ENCODE measurements at regions of chr5 and their contacts with region 1.

Region 1: DNA sequence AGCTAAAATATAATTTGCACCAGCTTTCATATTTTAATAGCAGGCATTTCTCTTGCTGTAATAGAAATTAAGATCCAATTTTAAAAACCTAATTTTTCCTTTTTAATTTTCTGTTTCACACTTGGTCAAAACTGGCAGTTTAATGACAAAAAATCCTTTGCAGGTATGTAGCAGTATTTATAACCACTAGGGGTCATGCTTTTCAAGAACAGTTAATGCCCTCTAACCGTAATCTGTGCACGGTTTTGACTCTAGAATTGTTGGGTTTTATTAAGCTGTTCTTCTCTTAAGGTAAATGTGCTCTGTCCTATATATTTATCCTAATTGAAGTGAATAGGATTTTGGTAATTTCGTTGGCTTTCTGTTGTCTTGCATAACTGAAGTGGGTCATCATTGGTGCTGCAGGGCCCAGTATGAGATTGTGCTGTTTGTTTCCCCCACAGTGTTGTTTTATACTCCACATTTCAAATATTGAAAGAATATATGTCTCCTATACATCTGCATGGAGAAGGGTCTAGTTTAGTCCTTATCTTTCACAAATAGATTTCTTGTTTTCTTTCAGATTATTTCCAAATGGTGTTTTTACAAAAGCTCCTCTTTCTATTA is 107.4 kb downstream of the SCAMP1 start:
- DNase-seq: peak in 1 of 2 experiments; percentile 17
- H3K4me3 ChIP-seq: no peak overlapping the region
- H3K4me3 Mint-ChIP-seq: no peak overlapping the region
- H3K27ac Mint-ChIP-seq: no peak overlapping the region
- H3K4me1 ChIP-seq: no peaks in the 10 kb centered on the region
- H3K4me1 Mint-ChIP-seq: no peaks in the 10 kb centered on the region
- H3K27me3 ChIP-seq: no peaks in the 10 kb centered on the region
- H3K27me3 Mint-ChIP-seq: no peaks in the 10 kb centered on the region
- CTCF ChIP-seq: peak; percentile 62 to 73

Region 2: DNA sequence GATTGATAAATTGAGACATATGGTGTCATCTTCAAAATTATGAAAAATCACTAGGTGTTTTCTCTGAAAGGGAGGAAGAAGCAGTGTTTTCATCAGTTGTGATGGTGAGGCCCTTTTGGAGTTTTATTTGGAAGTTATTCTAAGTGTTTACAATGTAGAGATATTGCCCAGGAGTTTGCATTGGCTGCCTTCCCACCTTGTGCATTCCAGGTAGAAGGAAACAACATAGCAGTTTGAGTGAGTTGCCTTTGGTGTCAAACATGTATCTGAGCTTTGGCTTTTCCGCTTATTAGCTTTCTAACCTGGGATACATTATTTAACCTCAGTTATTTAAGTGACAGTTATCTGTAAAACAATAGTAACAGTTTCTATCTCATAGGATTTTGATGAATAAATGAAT is 15.1 kb after region 1 on chr5:
- CTCF ChIA-PET with region 1: no interaction called
- POLR2A ChIA-PET with region 1: no interaction called
- intact Hi-C with region 1: no loop called
- DNase-seq: no peak
- H3K4me3 ChIP-seq: no peak overlapping the region
- H3K4me3 Mint-ChIP-seq: no peak overlapping the region
- H3K27ac Mint-ChIP-seq: no peak overlapping the region
- H3K4me1 ChIP-seq: no peaks in the 10 kb centered on the region
- H3K4me1 Mint-ChIP-seq: no peaks in the 10 kb centered on the region
- H3K27me3 ChIP-seq: no peaks in the 10 kb centered on the region
- H3K27me3 Mint-ChIP-seq: no peaks in the 10 kb centered on the region
- CTCF ChIP-seq: no peak

Region 3: GRCh38 chr5:78497573-78498533 is 30.0 kb after region 1 on chr5:
- CTCF ChIA-PET with region 1: no interaction called
- POLR2A ChIA-PET with region 1: no interaction called
- intact Hi-C with region 1: no loop called
- DNase-seq: no peak
- H3K4me3 ChIP-seq: no peak overlapping the region
- H3K4me3 Mint-ChIP-seq: no peak overlapping the region
- H3K27ac Mint-ChIP-seq: no peak overlapping the region
- H3K4me1 ChIP-seq: peaks cover 32% of the 10 kb centered on the region
- H3K4me1 Mint-ChIP-seq: peaks cover 55% of the 10 kb centered on the region
- H3K27me3 ChIP-seq: no peaks in the 10 kb centered on the region
- H3K27me3 Mint-ChIP-seq: no peaks in the 10 kb centered on the region
- CTCF ChIP-seq: no peak

Region 4: DNA sequence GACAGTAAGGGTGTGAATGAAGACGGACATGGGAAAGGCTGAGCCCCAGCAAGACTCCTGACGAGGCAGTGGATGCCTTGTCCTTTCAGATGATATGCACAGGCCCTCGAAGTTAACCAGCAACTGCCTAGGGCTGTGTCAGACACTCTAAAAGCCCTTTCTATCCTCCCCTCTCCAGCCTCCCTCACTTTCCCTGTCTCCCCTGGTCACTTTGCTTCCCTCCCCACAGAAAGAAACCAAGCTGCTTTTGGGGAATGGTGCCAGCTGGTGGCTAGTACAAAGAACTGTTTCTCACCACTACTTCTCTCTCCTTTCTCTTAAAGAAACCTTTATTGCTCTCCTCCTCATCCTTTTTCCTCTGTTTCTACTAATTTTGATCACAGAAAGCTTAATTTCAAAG is 159.3 kb after region 1 on chr5:
- CTCF ChIA-PET with region 1: interaction called, 3 read pairs
- POLR2A ChIA-PET with region 1: no interaction called
- intact Hi-C with region 1: loop called (anchors 5 kb)
- DNase-seq: no peak
- H3K4me3 ChIP-seq: no peak overlapping the region
- H3K4me3 Mint-ChIP-seq: no peak overlapping the region
- H3K27ac Mint-ChIP-seq: no peak overlapping the region
- H3K4me1 ChIP-seq: peaks cover 28% of the 10 kb centered on the region
- H3K4me1 Mint-ChIP-seq: peaks cover 39% of the 10 kb centered on the region
- H3K27me3 ChIP-seq: no peaks in the 10 kb centered on the region
- H3K27me3 Mint-ChIP-seq: no peaks in the 10 kb centered on the region
- CTCF ChIP-seq: peak in 1 of 2 experiments; percentile 60

Region 5: GRCh38 chr5:78899922-78900362 is 432.1 kb after region 1 on chr5:
- CTCF ChIA-PET with region 1: no interaction called
- POLR2A ChIA-PET with region 1: no interaction called
- intact Hi-C with region 1: loop called (anchors 10 kb)
- DNase-seq: peak; percentile 71
- H3K4me3 ChIP-seq: no peak overlapping the region
- H3K4me3 Mint-ChIP-seq: no peak overlapping the region
- H3K27ac Mint-ChIP-seq: no peak overlapping the region
- H3K4me1 ChIP-seq: 0 out of 2 replicates have a peak, but pooled peaks cover 4% of the 10 kb centered on the region
- H3K4me1 Mint-ChIP-seq: no peaks in the 10 kb centered on the region
- H3K27me3 ChIP-seq: no peaks in the 10 kb centered on the region
- H3K27me3 Mint-ChIP-seq: no peaks in the 10 kb centered on the region
- CTCF ChIP-seq: peak; percentile 69 to 86

Measured in Caco-2 (cell line).